ENCODE measurements at regions of chr7 and their contacts with region 1.

Region 1: DNA sequence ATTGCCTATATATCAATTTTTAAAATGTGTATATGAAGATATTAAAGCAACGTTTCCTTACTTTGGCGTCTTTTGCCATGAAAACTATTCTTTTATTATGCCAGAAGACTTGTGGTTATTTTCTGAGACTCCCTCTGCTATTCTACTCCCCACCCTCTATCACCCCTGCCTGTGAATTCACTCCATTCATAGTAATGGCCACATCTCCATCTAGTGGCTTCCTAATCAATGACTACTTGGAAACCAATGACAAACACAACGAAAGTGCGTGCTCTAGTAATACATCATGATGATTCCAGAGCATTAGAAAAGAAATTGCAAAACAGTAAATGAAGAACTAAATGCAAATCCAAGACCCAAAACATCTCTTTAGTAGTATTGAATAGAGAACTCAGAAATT is 186.7 kb upstream of the HGF start:
- DNase-seq: peak; percentile 47
- ATAC-seq: peak; percentile 96
- H3K4me3 ChIP-seq: no peak overlapping the region
- H3K27ac ChIP-seq: no peak overlapping the region
- H3K4me1 ChIP-seq: no peaks in the 10 kb centered on the region
- H3K27me3 ChIP-seq: no peaks in the 10 kb centered on the region
- CTCF ChIP-seq: peak; percentile 61 to 75 (median 70)
- POLR2A ChIP-seq: no peak
- RAD21 ChIP-seq: peak; percentile 80

Region 2: DNA sequence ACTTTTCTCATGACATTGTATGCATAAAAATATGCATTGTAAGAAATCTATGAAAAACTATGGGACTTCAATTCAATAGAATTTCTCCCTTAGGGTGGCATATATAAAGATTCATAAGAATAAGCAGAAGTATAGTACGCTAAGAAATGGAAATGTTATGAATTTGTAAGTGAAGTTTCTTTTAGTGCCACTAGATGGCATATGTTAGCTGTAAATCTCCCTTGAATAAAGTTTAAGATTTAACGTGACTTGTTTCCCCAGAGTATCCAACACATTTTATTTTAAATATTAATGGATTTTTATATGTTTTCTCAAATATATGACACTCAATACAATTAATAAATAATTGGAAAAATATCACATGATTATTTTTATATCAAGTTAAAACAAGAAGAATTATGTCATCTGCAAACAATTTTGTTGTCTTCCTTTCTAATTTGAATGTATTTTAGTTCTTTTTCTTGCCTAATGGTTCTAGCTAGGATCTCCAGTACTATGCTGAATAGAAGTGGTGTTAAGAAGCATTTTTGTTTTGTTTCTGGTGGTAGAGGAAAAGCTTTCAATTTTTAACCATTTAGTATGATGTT is 473.8 kb before region 1 on chr7:
- CTCF ChIA-PET with region 1: no interaction called
- POLR2A ChIA-PET with region 1: no interaction called
- RAD21 ChIA-PET with region 1: no interaction called
- intact Hi-C with region 1: loop called (anchors 5 kb)
- DNase-seq: peak; percentile 23
- ATAC-seq: 0 out of 2 replicates have a peak, but pooled peaks have one; percentile 38
- H3K4me3 ChIP-seq: no peak overlapping the region
- H3K27ac ChIP-seq: no peak overlapping the region
- H3K4me1 ChIP-seq: no peaks in the 10 kb centered on the region
- H3K27me3 ChIP-seq: no peaks in the 10 kb centered on the region
- CTCF ChIP-seq: peak; percentile 31 to 54 (median 39); a peak in 4 of 6 replicates
- POLR2A ChIP-seq: no peak
- RAD21 ChIP-seq: peak; percentile 67

Region 3: DNA sequence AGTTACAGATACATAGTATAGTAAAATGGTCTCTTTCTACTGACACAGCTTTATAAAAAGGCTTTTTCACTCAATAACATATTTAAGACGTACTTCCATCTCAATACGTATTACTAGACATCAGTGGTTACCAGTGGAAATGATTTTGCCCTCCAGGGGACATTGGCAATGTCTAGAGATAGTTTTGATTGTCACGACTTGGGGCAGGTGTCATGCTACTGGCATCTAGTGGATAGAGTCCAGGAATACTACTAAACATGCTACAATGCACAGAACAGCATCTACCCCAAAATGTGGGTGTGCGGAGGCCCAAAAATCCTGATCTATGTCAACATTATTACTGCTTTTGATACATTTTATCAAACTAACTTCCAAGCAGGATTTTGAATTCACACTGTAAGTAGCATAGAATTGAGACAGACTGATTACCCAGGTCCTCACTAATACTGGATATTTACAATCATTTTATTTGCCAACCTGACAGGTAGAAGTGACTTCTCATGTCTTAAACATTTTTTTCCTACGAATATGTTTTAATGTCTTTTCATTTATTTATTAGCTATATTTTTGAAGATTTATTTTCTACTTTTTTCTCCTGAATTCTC is 240.4 kb before region 1 on chr7:
- CTCF ChIA-PET with region 1: no interaction called
- POLR2A ChIA-PET with region 1: no interaction called
- RAD21 ChIA-PET with region 1: no interaction called
- intact Hi-C with region 1: loop called (anchors 2 kb)
- DNase-seq: peak; percentile 60
- ATAC-seq: peak; percentile 93
- H3K4me3 ChIP-seq: no peak overlapping the region
- H3K27ac ChIP-seq: no peak overlapping the region
- H3K4me1 ChIP-seq: no peaks in the 10 kb centered on the region
- H3K27me3 ChIP-seq: no peaks in the 10 kb centered on the region
- CTCF ChIP-seq: peak; percentile 48 to 80 (median 67); a peak in 4 of 6 replicates
- POLR2A ChIP-seq: no peak
- RAD21 ChIP-seq: peak; percentile 84